Activated CD4-positive, alpha-beta memory T cell treated with anti-CD3 and anti-CD28 coated beads for 36 hours (primary cell): ENCODE measurements at regions of chr1 and their contacts with region 1.

Region 1: GRCh38 chr1:157090196-157090647 is 9.4 kb downstream of the ETV3L start:
- DNase-seq: peak; percentile 90
- H3K4me3 Mint-ChIP-seq: no peak overlapping the region
- H3K27ac Mint-ChIP-seq: no peak overlapping the region
- H3K4me1 Mint-ChIP-seq: peaks cover 5% of the 10 kb centered on the region
- H3K27me3 Mint-ChIP-seq: peaks cover 3% of the 10 kb centered on the region

Region 2: DNA sequence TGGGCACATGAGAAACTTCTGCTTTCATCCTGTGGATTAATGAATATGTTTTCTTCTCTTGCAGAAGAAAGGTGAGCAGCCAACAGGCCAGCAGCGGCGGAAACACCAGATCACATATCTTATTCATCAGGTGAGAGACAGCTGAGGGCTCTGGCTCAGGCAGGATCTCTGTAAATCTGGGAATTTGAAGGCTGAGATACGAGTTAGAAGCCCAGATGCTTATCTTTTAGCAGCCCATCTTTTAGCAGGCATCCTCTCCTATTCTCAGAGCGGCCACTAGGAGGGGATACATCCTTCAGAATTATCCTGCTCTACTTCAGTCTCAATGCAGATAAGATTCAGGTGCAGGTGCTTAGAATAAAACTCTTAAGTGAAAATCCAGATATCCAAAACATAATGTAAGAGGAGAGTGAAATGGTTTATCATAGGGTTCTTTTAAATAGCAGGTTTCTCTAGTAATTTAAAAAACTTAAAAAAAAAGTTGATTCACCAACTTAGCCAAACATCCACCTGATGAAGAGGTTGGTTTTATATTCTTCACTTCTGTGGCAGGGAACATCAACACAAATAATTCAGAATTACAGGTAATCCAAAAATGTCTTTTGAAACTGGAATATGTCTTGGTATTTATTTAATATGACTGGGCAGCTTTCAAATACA is 292.9 kb before region 1 on chr1:
- CTCF ChIA-PET with region 1: no interaction called
- POLR2A ChIA-PET with region 1: no interaction called
- intact Hi-C with region 1: no loop called
- DNase-seq: peak; percentile 71
- H3K4me3 Mint-ChIP-seq: no peak overlapping the region
- H3K27ac Mint-ChIP-seq: no peak overlapping the region
- H3K4me1 Mint-ChIP-seq: peaks cover 21% of the 10 kb centered on the region
- H3K27me3 Mint-ChIP-seq: no peaks in the 10 kb centered on the region

Region 3: DNA sequence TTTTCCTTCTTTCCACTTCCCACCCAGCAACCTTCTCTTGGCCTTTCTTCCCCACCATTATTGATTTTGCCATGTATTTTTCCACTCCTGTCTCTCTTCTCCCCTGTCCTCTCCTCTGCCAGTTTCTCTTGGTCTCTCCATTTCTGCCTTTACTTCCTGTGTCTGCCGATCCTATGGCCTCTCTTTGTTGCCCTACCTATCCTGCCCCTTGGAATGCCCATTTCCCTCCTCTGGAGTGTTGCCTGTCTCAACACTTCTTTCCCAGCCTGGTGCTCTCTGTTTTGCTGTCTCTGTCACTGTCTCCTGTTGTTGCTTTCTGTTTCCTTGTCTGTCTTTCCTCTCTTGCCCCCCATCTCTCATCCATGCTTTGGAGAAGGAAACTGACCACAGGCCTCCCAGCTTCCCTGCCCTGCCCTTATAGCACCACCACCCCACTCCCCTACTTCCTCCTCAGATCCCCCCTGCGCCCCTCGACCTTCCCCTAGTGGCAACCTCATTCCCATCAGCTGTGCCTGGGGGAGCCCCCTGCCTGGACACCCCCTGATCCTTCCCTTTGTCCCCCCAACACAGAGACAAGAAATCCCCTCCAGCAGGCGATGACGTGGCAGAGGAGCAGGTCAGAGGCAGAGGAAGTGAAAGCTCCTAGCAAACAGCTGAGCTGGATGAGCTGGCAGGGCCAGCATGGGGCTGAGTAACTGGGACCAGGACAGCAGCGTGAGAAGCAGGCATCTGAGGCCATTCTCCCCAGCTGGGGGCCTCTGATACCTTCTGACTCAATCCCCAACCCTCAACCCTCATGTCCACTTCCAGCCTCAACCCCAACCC is 16.0 kb after region 1 on chr1:
- CTCF ChIA-PET with region 1: interaction called, 17 read pairs
- POLR2A ChIA-PET with region 1: no interaction called
- intact Hi-C with region 1: no loop called
- DNase-seq: peak; percentile 73
- H3K4me3 Mint-ChIP-seq: no peak overlapping the region
- H3K27ac Mint-ChIP-seq: no peak overlapping the region
- H3K4me1 Mint-ChIP-seq: peaks cover 11% of the 10 kb centered on the region
- H3K27me3 Mint-ChIP-seq: peaks cover 26% of the 10 kb centered on the region

Region 4: GRCh38 chr1:157138220-157139051 is 48.2 kb after region 1 on chr1 and contains the start of gene ETV3:
- CTCF ChIA-PET with region 1: interaction called, 92 read pairs
- POLR2A ChIA-PET with region 1: no interaction called
- intact Hi-C with region 1: no loop called
- DNase-seq: peak; percentile 94
- H3K4me3 Mint-ChIP-seq: peak within 1 kb of the TSS; percentile 98
- H3K27ac Mint-ChIP-seq: peak within 1 kb of the TSS; percentile 88
- H3K4me1 Mint-ChIP-seq: peaks cover 73% of the 10 kb centered on the region
- H3K27me3 Mint-ChIP-seq: no peaks in the 10 kb centered on the region
- total RNA-seq, gene ETV3: 30.9 to 32.4 TPM

Region 5: GRCh38 chr1:157156058-157156541 is 65.9 kb after region 1 on chr1:
- CTCF ChIA-PET with region 1: interaction called, 643 read pairs
- POLR2A ChIA-PET with region 1: interaction called, 17 read pairs
- intact Hi-C with region 1: loop called (anchors 1 kb)
- DNase-seq: peak; percentile 83
- H3K4me3 Mint-ChIP-seq: no peak overlapping the region
- H3K27ac Mint-ChIP-seq: no peak overlapping the region
- H3K4me1 Mint-ChIP-seq: peaks cover 16% of the 10 kb centered on the region
- H3K27me3 Mint-ChIP-seq: peaks cover 11% of the 10 kb centered on the region